ENCODE measurements at regions of chr1 and their contacts with region 1.

Region 1: GRCh38 chr1:46527474-46528296 is 23.8 kb downstream of the KNCN start:
- DNase-seq: peak; percentile 64
- ATAC-seq: peak; percentile 50
- H3K4me3 ChIP-seq: no peak overlapping the region
- H3K4me3 Mint-ChIP-seq: no peak overlapping the region
- H3K27ac ChIP-seq: no peak overlapping the region
- H3K27ac Mint-ChIP-seq: no peak overlapping the region
- H3K4me1 ChIP-seq: no peaks in the 10 kb centered on the region
- H3K4me1 Mint-ChIP-seq: no peaks in the 10 kb centered on the region
- H3K27me3 ChIP-seq: peaks cover 0 to 40% (median 9%) of the 10 kb centered on the region in 4 experiments
- H3K27me3 Mint-ChIP-seq: peaks cover 58% of the 10 kb centered on the region
- CTCF ChIP-seq: peak; percentile 80

Region 2: DNA sequence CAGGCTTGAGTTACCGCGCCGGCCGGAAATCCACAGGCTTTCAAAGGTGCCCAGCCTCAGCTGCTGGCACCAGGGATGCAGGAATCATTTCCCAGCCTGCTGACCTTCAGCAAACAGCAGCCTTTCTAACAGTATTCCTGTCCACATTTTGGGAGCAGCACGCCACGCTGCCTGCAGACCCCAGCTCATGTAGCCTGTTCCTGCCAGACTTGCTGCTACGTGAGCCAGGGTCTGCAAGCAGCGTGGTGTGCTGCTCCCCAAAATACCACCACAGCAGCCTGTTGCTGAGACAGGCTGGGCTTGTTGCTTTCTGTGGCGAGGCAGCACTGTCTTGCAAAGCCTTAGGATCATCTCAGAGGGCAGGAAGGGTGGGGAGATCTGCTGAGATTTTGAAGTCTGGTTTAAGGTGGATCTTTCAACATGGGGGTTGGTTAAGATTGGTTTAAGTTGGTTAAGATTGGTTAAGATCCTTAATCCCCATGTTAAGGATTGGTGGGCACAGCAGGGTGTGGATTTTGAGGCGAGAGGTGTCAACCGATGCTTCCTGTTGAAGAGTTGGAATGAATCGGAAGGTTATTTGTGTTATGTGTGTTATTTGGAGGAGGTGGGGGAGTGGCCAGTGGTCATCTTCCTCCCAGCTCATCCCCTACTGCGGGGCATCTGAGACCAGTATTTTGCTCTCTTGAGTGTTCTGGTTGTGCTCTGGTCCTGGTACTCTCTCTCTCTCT is 120.6 kb before region 1 on chr1:
- CTCF ChIA-PET with region 1: interaction called, 10 read pairs
- POLR2A ChIA-PET with region 1: no interaction called
- intact Hi-C with region 1: loop called (anchors 1 kb)
- DNase-seq: no peak
- ATAC-seq: no peak
- H3K4me3 ChIP-seq: no peak overlapping the region
- H3K4me3 Mint-ChIP-seq: no peak overlapping the region
- H3K27ac ChIP-seq: no peak overlapping the region
- H3K27ac Mint-ChIP-seq: no peak overlapping the region
- H3K4me1 ChIP-seq: no peaks in the 10 kb centered on the region
- H3K4me1 Mint-ChIP-seq: no peaks in the 10 kb centered on the region
- H3K27me3 ChIP-seq: no peaks in the 10 kb centered on the region
- H3K27me3 Mint-ChIP-seq: no peaks in the 10 kb centered on the region
- CTCF ChIP-seq: peak; percentile 4

Region 3: DNA sequence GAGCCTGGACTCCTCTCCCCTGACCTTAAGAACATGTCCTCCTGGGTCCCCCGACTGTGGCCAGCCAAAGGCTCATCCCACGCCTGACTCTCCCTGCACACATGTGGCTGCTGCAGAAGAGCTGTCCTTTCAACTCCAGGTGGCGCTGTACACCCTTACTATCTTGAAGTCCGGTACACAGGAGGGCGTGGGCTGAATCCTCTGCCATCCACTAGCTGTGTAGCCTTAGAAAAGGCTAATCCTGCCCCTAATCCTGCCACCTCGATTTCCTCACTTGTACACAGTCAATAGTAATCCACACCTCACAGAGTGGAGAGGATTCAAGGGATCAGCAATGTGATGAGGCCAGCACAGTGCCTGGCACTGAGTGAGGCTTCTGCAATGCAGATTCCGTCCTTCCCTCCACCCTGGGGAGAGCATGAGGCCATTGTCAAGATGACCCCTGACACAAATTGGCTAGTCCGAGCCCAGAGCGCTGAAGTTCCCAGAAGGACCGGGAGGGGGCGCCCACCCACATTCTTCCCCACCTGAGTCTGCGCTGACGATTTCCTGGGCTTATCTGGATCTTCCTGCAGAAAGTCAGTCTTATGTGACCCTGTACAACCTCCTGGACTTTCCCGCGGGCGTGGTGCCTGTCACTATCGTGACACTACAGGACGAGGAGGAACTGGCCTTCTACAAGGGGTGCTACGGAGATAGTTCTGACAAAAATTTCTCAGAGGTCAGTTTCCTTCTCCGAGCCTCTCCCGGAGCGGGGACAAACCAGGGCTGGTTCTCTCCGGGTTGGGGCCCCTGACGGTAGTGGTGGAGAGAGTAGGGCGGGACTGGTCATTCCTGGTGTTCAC is 85.1 kb before region 1 on chr1:
- CTCF ChIA-PET with region 1: interaction called, 122 read pairs
- POLR2A ChIA-PET with region 1: no interaction called
- intact Hi-C with region 1: loop called (anchors 1 kb)
- DNase-seq: peak; percentile 69
- ATAC-seq: peak; percentile 74
- H3K4me3 ChIP-seq: peak overlapping the region in 4 of 5 experiments; percentile 11 to 63 (median 34)
- H3K4me3 Mint-ChIP-seq: peak overlapping the region; percentile 85
- H3K27ac ChIP-seq: no peak overlapping the region
- H3K27ac Mint-ChIP-seq: no peak overlapping the region
- H3K4me1 ChIP-seq: peaks cover 6 to 12% of the 10 kb centered on the region in 2 donors
- H3K4me1 Mint-ChIP-seq: peaks cover 16% of the 10 kb centered on the region
- H3K27me3 ChIP-seq: peaks cover 0 to 33% (median 14%) of the 10 kb centered on the region in 4 experiments
- H3K27me3 Mint-ChIP-seq: peaks cover 34% of the 10 kb centered on the region
- CTCF ChIP-seq: peak; percentile 96

Region 4: DNA sequence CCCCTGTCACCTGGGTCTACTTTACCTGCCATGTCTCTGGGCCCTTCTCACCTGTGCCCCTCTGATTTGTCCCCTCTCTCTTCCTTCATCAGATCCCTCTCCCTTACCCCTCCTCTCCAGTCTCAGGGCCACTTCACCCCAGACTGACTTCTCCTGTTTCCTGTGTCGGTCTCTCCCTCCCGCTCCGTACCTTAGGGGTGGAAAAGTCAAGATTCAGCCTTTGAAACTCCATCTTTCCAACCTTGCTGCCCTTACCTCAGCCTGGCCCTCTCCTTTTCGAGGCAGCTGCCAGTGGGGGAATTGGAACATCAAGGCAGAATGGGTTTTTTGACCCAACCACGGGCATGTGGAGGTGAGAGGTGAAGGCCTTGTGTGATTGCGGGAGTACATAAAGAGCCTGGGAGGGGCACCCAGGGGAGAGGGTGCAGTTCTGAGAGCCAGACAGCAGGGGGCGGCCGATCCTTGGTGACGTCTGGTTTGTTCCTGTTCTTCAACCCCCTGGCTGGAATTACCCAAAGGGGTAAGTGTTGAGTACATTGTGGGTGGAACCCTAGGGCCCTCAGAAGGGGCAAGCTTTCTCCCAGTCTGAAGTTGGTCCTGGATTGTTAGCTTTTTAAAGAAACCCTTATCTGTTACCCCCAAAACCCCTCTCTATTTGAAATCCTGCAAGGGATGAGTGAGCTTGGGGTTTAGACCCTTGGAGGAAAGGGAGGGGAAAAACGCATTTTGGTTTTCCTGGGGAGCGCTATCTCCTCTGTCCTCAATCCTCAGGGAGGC is 50.3 kb before region 1 on chr1:
- CTCF ChIA-PET with region 1: interaction called, 8 read pairs
- POLR2A ChIA-PET with region 1: no interaction called
- intact Hi-C with region 1: loop called (anchors 2 kb)
- DNase-seq: peak; percentile 84
- ATAC-seq: peak; percentile 87
- H3K4me3 ChIP-seq: no peak overlapping the region
- H3K4me3 Mint-ChIP-seq: peak overlapping the region; percentile 24
- H3K27ac ChIP-seq: no peak overlapping the region
- H3K27ac Mint-ChIP-seq: no peak overlapping the region
- H3K4me1 ChIP-seq: peaks cover 11 to 13% of the 10 kb centered on the region in 2 donors
- H3K4me1 Mint-ChIP-seq: peaks cover 42% of the 10 kb centered on the region
- H3K27me3 ChIP-seq: peaks cover 0 to 16% (median 4%) of the 10 kb centered on the region in 4 experiments
- H3K27me3 Mint-ChIP-seq: peaks cover 31% of the 10 kb centered on the region
- CTCF ChIP-seq: peak; percentile 91

Measured in B cell (primary cell).